Transverse colon (tissue), 4 donors: ENCODE measurements at regions of chr11 and their contacts with region 1.

Region 1: DNA sequence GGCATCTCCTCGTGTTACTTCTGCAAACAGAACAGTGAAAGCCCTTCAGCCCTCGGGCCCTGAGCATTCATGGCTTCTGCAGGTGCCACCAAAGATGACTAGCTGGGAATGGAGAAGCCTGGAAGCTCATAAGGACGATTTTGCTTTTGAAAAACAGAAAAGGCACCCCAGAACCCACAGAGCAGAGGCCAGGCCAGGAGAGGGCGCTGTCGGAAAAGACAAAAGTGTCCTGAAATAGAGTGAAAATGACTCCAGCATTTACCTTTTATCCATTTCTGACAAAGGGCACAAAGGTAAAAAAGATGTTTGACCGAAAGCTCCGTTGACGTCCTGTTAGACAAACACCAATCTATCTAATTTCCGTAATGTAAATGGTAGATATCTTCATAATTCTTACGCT is 37.6 kb downstream of the ZNF195 start:
- DNase-seq: peak; percentile 72
- H3K4me3 ChIP-seq: no peak overlapping the region
- H3K27ac ChIP-seq: no peak overlapping the region
- H3K4me1 ChIP-seq: no peaks in the 10 kb centered on the region
- H3K27me3 ChIP-seq: peaks cover 20% of the 10 kb centered on the region
- CTCF ChIP-seq: peak; percentile 57 to 82 (median 71)
- EP300 ChIP-seq: no peak
- POLR2A ChIP-seq: no peak

Region 2: GRCh38 chr11:2791521-2792380 is 549.5 kb before region 1 on chr11:
- in situ Hi-C with region 1: no loop called
- intact Hi-C with region 1: no loop called
- DNase-seq: peak; percentile 14
- H3K4me3 ChIP-seq: peak overlapping the region; percentile 5 to 56 (median 48)
- H3K27ac ChIP-seq: peak overlapping the region; percentile 26 to 46 (median 42)
- H3K4me1 ChIP-seq: peaks cover 0 to 13% (median 7%) of the 10 kb centered on the region in 4 donors
- H3K27me3 ChIP-seq: no peaks in the 10 kb centered on the region
- CTCF ChIP-seq: no peak
- EP300 ChIP-seq: no peak
- POLR2A ChIP-seq: no peak

Region 3: GRCh38 chr11:3412837-3413236 is 71.5 kb after region 1 on chr11:
- in situ Hi-C with region 1: loop called in 1 of 4 experiments (anchors 10 kb)
- intact Hi-C with region 1: no loop called
- DNase-seq: no peak
- H3K4me3 ChIP-seq: no peak overlapping the region
- H3K27ac ChIP-seq: no peak overlapping the region
- H3K4me1 ChIP-seq: no peaks in the 10 kb centered on the region
- H3K27me3 ChIP-seq: no peaks in the 10 kb centered on the region
- CTCF ChIP-seq: no peak
- EP300 ChIP-seq: no peak
- POLR2A ChIP-seq: no peak

Region 4: DNA sequence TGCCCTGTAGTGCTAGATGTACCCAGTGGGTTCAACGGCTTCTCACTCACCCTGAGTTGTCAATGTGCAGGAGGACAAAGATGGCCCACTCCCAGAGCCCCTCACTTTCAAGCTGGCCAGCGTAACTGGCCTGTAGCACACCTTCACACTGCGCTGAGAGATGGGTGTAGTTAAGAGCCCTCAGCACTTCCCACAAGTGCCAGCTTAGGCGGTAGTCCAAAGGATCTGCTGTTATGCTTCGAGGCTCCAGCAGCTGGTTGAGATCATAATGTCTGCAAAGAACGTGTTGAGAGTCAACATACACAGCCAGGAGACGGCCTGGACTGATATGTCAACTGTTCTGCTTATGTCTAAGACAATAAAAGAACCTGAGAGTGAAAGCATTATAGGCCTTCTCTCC is 344.6 kb after region 1 on chr11:
- in situ Hi-C with region 1: no loop called
- intact Hi-C with region 1: no loop called
- DNase-seq: no peak
- H3K4me3 ChIP-seq: no peak overlapping the region
- H3K27ac ChIP-seq: no peak overlapping the region
- H3K4me1 ChIP-seq: no peaks in the 10 kb centered on the region
- H3K27me3 ChIP-seq: no peaks in the 10 kb centered on the region
- CTCF ChIP-seq: no peak
- EP300 ChIP-seq: no peak
- POLR2A ChIP-seq: no peak